K562 (cell line): ENCODE measurements at regions of chr1 and their contacts with region 1.

Region 1: GRCh38 chr1:27455139-27455811 is 34.7 kb downstream of the WASF2 start:
- DNase-seq: no peak
- ATAC-seq: peak; percentile 40; the same call in 2 of the 3 replicates
- H3K4me3 ChIP-seq: no peak overlapping the region
- H3K27ac ChIP-seq: peak overlapping the region; percentile 12; the same call in 1 of the 3 replicates
- H3K4me1 ChIP-seq: peaks cover 4 to 7% of the 10 kb centered on the region in 2 experiments; a peak in 2 of 5 replicates
- H3K27me3 ChIP-seq: no peaks in the 10 kb centered on the region
- CTCF ChIP-seq: no peak
- EP300 ChIP-seq: no peak
- POLR2A ChIP-seq: no peak
- RAD21 ChIP-seq: no peak

Region 2: GRCh38 chr1:27436204-27437159 is 18.8 kb before region 1 on chr1:
- CTCF ChIA-PET with region 1: no interaction called
- POLR2A ChIA-PET with region 1: interaction called, 14 read pairs
- in situ Hi-C with region 1: no loop called
- intact Hi-C with region 1: no loop called
- DNase-seq: peak; percentile 41 to 68 (median 54)
- ATAC-seq: peak; percentile 92
- H3K4me3 ChIP-seq: no peak overlapping the region
- H3K27ac ChIP-seq: peak overlapping the region; percentile 53; the same call in 1 of the 3 replicates
- H3K4me1 ChIP-seq: peaks cover 14 to 53% of the 10 kb centered on the region in 2 experiments
- H3K27me3 ChIP-seq: no peaks in the 10 kb centered on the region
- CTCF ChIP-seq: no peak
- EP300 ChIP-seq: no peak
- POLR2A ChIP-seq: no peak
- RAD21 ChIP-seq: 0 out of 4 replicates have a peak, but pooled peaks of 1 of the 2 experiments have one; percentile 7